PC-9 (cell line): ENCODE measurements at regions of chr1 and their contacts with region 1.

Region 1: DNA sequence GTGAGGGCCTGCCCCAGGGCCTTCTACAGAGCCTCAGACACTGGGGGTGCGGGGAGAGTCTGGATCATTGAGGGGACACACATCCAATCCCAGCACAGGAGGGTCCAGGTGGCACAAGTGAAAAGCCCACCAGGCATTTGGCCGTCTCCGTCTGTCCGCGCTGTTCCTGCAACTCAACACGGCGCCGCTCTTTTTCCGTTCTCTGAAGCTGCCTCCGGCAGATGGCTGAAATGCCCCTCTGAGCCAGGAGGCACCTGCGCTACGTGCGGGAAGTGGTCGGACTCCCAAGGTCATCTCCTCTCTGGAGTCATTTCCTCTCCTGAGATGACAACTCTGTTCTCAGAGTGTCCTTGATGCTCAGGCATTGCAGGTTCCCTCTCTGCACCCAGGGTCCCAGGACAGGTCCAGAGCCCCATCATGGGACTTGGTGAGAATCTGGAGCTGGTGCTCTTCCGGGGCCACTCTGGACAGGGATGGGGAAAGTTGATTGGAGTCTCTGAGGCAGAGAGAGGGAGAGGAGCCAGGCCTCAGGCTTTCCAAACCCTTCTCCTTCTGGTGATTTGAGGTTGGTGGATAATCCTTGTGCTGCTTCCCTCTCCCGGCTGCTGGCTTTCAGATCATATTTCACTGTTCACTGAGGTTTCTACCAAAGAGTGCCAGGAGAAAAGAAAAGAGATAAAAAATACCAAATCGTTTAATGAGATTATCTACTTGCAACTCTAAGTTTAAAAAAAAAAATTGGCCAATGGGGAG is 14.0 kb upstream of the MIXL1 start:
- DNase-seq: no peak
- H3K4me3 ChIP-seq: no peak overlapping the region
- H3K27ac ChIP-seq: no peak overlapping the region
- H3K4me1 ChIP-seq: no peaks in the 10 kb centered on the region
- H3K27me3 ChIP-seq: no peaks in the 10 kb centered on the region
- CTCF ChIP-seq: no peak

Region 2: GRCh38 chr1:226308723-226309315 is 99.3 kb after region 1 on chr1 and contains the start of gene LIN9:
- CTCF ChIA-PET with region 1: no interaction called
- POLR2A ChIA-PET with region 1: no interaction called
- intact Hi-C with region 1: no loop called
- DNase-seq: peak; percentile 75 to 94
- H3K4me3 ChIP-seq: peak within 1 kb of the TSS; percentile 99
- H3K27ac ChIP-seq: peak within 1 kb of the TSS; percentile 40; the same call in 1 of the 2 replicates
- H3K4me1 ChIP-seq: peaks cover 24% of the 10 kb centered on the region
- H3K27me3 ChIP-seq: no peaks in the 10 kb centered on the region
- CTCF ChIP-seq: peak; percentile 24; the same call in 1 of the 2 replicates
- total RNA-seq, gene LIN9: 10.0 and 12.1 TPM in 2 replicates

Region 3: DNA sequence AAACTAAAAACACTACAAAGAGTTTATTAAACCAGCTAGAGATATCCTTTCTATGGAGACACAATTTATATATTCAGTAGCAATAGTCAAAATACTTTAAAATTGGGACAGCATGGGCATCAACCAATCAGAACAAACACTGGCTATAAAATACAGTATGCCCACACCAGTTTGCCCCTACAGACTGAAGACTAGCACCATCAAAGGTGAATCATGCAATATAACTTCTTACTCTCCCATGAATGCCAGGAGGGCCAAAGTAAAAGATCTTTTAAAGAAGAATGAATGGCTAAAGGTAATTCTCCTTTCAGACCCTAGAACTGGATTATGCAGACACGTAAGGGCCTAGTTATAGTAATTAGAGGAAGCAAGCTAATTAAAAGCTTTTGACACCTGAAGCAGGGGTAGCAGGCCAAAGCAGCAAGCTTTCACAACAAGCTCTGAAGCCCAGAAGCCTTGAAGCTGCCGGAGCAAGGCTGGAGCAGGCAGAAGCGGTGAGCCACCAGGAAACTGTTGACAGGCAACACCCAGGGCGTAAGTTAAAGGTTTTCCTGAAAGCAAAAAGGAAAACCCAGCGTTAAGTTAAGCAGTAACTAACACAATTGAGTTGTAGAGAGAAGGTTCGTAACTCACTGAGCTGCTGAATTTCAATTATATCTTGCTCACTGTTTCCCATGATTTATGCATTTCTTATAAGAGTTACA is 1009.5 kb after region 1 on chr1:
- CTCF ChIA-PET with region 1: no interaction called
- POLR2A ChIA-PET with region 1: interaction called, 10 read pairs
- intact Hi-C with region 1: no loop called
- DNase-seq: no peak
- H3K4me3 ChIP-seq: no peak overlapping the region
- H3K27ac ChIP-seq: no peak overlapping the region
- H3K4me1 ChIP-seq: no peaks in the 10 kb centered on the region
- H3K27me3 ChIP-seq: no peaks in the 10 kb centered on the region
- CTCF ChIP-seq: no peak